CD4-positive, alpha-beta T cell (primary cell): ENCODE measurements at regions of chr10 and their contacts with region 1.

Region 1: DNA sequence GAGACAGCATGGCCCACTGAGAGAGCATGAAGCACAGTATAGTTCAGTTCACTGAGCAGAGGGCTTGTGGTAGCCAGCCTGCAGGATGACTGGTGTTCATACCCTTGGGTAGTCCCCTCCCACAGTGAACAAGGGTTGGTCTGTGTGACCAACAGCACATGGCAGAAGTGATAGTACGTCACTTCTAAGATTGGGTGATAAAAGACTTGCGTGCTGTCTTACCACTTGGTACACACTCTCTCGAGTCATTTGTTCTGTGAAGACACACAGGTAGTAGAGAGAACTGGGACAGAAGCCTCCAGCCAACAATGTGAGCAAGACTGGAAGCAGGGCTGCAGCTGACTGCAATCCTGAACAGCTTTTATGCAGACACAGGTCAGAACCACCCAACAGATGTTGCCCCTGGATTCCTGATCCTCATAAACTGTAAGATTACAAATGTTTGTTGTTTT is 14.6 kb downstream of the EPC1 start:
- DNase-seq: peak; percentile 30 to 92 (median 56)
- ATAC-seq: peak; percentile 93
- H3K4me3 ChIP-seq: peak overlapping the region; percentile 2
- H3K4me3 Mint-ChIP-seq: peak overlapping the region; percentile 73
- H3K27ac ChIP-seq: no peak overlapping the region
- H3K27ac Mint-ChIP-seq: peak overlapping the region; percentile 87
- H3K4me1 ChIP-seq: peaks cover 61% of the 10 kb centered on the region
- H3K4me1 Mint-ChIP-seq: peaks cover 96% of the 10 kb centered on the region
- H3K27me3 ChIP-seq: no peaks in the 10 kb centered on the region
- H3K27me3 Mint-ChIP-seq: no peaks in the 10 kb centered on the region
- CTCF ChIP-seq: no peak

Region 2: GRCh38 chr10:32318476-32318896 is 13.8 kb before region 1 on chr10:
- CTCF ChIA-PET with region 1: interaction called, 6 read pairs
- POLR2A ChIA-PET with region 1: interaction called, 8 read pairs
- intact Hi-C with region 1: loop called in 1 of 2 experiments (anchors 2 kb)
- DNase-seq: peak in 3 of 14 experiments; percentile 45 to 72 (median 62)
- ATAC-seq: peak; percentile 57
- H3K4me3 ChIP-seq: no peak overlapping the region
- H3K4me3 Mint-ChIP-seq: peak overlapping the region; percentile 72
- H3K27ac ChIP-seq: peak overlapping the region in 1 of 2 donors; percentile 45
- H3K27ac Mint-ChIP-seq: peak overlapping the region; percentile 83
- H3K4me1 ChIP-seq: peaks cover 55% of the 10 kb centered on the region
- H3K4me1 Mint-ChIP-seq: peaks cover 91% of the 10 kb centered on the region
- H3K27me3 ChIP-seq: no peaks in the 10 kb centered on the region
- H3K27me3 Mint-ChIP-seq: no peaks in the 10 kb centered on the region
- CTCF ChIP-seq: no peak